ENCODE measurements at regions of chr6 and their contacts with region 1.

Region 1: DNA sequence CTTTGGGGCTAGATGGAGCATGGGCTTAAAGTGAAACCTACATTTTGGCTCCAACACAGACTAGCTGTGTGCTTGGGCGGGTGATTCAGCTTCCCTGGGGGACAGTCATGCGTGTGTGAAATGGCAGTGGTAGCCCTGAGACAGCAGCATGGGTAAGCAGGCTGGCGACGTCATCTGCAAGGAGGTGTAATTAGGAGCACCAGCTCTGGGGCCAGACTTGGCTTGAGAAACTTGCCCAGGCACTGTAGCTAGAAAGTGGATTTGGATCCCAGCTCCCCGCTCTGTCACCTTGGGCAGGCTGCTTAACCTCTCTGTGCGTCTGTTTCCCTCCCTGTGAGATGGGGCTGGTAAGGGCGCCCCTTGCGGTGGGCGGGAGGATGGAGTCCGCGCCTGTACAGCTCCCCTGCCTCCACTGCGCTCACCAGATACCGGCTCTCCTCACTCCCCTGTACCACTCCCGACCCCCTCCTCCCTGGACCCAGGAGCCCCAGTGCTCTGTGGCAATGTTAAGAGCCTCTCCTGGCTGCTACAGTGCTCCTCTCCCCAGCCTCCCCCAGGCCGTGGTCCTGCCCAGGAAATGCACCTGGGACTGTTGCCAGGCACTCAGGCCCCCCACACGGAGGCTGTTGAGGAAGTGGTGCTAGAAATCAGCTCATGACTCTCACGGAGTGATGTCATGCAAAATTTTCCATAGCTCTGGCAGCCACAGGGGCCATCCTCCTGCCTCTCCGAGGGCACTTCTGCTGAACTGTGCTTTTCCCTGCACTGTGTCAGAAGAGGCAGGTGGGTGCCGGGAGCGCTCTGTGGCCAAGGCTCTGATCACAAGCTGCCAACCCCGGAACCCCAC is 44.6 kb downstream of the SYNJ2 start:
- DNase-seq: peak; percentile 99 to 100 (median 100)
- H3K4me3 ChIP-seq: peak overlapping the region in 5 of 7 experiments; percentile 21 to 64 (median 48)
- H3K27ac ChIP-seq: peak overlapping the region; percentile 68 to 86
- H3K4me1 ChIP-seq: peaks cover 4 to 37% (median 35%) of the 10 kb centered on the region in 4 experiments
- H3K27me3 ChIP-seq: no peaks in the 10 kb centered on the region

Region 2: GRCh38 chr6:157946865-157947532 is 79.3 kb before region 1 on chr6:
- CTCF ChIA-PET with region 1: interaction called, 10 read pairs
- POLR2A ChIA-PET with region 1: no interaction called
- DNase-seq: peak; percentile 52 to 78 (median 77)
- H3K4me3 ChIP-seq: no peak overlapping the region
- H3K27ac ChIP-seq: no peak overlapping the region
- H3K4me1 ChIP-seq: peaks cover 0 to 7% (median 0%) of the 10 kb centered on the region in 4 experiments
- H3K27me3 ChIP-seq: no peaks in the 10 kb centered on the region

Region 3: DNA sequence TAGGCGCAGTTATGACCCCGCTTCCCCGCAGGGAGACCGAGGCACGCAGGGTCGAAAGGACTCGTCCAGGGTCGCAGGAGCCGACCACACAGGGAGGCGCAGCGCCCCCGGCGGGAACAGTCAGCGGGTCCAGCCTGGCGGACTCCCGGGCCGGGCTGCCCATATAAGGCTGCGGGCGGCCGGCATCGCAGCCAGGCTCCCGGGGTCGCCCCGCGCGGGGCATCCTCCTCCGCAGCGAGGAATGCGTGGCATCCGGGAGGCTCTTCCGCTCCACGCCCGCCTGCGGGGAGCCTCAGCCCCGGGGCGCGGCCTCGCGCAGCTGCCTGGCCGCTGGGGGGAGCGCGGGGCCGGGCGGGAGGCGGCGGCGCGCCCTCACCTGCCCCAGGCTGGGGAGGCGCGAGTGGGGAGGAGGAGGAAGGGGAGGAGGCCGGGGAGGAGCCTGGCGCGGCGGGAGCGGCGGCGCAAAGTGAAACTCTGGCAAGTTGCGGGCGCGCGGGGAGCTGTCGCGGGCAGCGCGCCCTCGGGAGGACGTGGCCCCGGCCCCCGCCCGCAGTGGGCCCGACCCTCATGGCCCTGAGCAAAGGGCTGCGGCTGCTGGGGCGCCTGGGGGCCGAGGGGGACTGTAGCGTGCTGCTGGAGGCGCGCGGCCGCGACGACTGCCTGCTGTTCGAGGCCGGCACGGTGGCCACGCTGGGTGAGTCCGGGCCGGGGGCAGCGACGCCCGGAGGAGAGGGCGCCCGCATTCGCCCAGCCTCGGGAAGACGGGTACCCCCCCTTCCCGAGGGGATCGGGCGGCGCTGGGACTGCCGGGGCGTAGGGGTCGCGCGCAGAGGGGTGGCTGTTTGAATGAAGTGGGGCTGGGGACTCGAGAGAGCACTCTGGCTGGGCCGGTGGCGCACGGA is 44.6 kb before region 1 on chr6 and contains the start of gene SYNJ2:
- CTCF ChIA-PET with region 1: interaction called, 14 read pairs
- POLR2A ChIA-PET with region 1: interaction called, 10 read pairs
- DNase-seq: peak; percentile 73 to 90 (median 83)
- H3K4me3 ChIP-seq: peak within 1 kb of the TSS; percentile 60 to 86 (median 75)
- H3K27ac ChIP-seq: peak within 1 kb of the TSS in 1 of 2 experiments; percentile 52
- H3K4me1 ChIP-seq: peaks cover 12 to 76% (median 68%) of the 10 kb centered on the region in 4 experiments
- H3K27me3 ChIP-seq: peaks cover 0 to 3% (median 0%) of the 10 kb centered on the region in 5 experiments

Region 4: DNA sequence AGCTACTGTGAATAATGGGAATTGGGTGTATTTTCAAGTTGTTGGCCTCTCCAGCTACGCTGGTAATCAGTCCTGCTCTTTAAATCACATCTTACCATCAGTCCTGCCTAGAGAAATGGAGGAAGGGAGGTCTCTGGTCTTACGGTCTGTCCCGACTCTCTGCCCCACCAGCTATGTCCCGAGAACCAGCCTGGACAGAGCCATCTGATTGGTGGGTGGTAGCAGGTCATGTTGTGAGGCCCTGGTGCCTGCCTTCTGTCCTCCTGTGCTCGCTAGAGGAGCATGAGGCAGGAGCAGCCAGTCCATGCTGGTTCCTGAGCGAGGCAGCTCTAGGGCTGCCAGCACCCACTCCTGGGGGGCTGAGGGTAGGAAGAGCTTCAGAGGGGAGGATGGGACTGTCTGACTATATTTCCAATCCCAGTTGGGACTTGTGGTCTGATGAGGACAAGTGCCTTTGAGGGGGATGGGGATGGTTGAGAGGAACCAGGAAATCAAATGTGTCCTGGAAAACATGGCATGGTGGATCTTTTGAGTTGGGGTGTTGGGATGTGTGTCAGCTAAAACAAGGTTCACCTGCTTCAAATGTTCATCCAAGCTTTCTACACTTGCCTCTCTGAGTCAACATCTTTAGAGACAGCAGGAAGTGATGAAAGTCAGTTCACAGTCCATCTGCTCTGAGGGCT is 11.6 kb before region 1 on chr6:
- CTCF ChIA-PET with region 1: interaction called, 22 read pairs
- POLR2A ChIA-PET with region 1: no interaction called
- DNase-seq: peak in 2 of 3 donors; percentile 32 to 45
- H3K4me3 ChIP-seq: no peak overlapping the region
- H3K27ac ChIP-seq: no peak overlapping the region
- H3K4me1 ChIP-seq: peaks cover 2 to 22% (median 8%) of the 10 kb centered on the region in 4 experiments
- H3K27me3 ChIP-seq: no peaks in the 10 kb centered on the region

Region 5: GRCh38 chr6:158040051-158040803 is 13.9 kb after region 1 on chr6:
- CTCF ChIA-PET with region 1: interaction called, 34 read pairs
- POLR2A ChIA-PET with region 1: interaction called, 5 read pairs
- DNase-seq: peak; percentile 96 to 100 (median 99)
- H3K4me3 ChIP-seq: peak overlapping the region in 3 of 7 experiments; percentile 40 to 60 (median 44)
- H3K27ac ChIP-seq: peak overlapping the region; percentile 60 to 88
- H3K4me1 ChIP-seq: peaks cover 2 to 39% (median 34%) of the 10 kb centered on the region in 4 experiments
- H3K27me3 ChIP-seq: no peaks in the 10 kb centered on the region

Region 6: DNA sequence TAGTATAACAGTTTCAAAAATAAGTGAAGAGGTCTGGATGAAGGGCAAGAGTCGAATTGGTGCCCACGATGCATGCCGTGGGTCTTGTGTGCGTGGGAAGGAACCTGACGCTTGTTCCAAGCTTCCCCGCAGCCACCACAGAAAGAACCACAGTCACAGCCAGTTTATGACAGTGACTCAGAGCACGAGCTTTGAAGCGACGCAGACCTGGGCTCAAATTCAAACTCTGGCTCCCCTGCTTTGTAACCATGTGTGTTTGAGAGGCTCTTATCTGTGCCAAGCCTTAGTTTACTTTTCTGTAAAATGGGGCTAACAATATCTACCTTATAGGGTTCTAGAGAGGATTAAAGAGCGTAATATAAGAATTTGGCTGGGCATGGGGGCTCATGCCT is 20.8 kb after region 1 on chr6:
- CTCF ChIA-PET with region 1: interaction called, 34 read pairs
- POLR2A ChIA-PET with region 1: no interaction called
- DNase-seq: peak in 2 of 3 donors; percentile 62 to 77
- H3K4me3 ChIP-seq: no peak overlapping the region
- H3K27ac ChIP-seq: no peak overlapping the region
- H3K4me1 ChIP-seq: peaks cover 0 to 12% (median 0%) of the 10 kb centered on the region in 4 experiments
- H3K27me3 ChIP-seq: no peaks in the 10 kb centered on the region

Measured in common myeloid progenitor, CD34-positive (primary cell).